PC-9 (cell line): ENCODE measurements at regions of chr9 and their contacts with region 1.

Region 1: GRCh38 chr9:92634712-92635605 is 35.0 kb downstream of the IPPK start:
- DNase-seq: peak in 1 of 2 experiments; percentile 64
- H3K4me3 ChIP-seq: no peak overlapping the region
- H3K27ac ChIP-seq: no peak overlapping the region
- H3K4me1 ChIP-seq: no peaks in the 10 kb centered on the region
- H3K27me3 ChIP-seq: no peaks in the 10 kb centered on the region
- CTCF ChIP-seq: peak; percentile 87

Region 2: DNA sequence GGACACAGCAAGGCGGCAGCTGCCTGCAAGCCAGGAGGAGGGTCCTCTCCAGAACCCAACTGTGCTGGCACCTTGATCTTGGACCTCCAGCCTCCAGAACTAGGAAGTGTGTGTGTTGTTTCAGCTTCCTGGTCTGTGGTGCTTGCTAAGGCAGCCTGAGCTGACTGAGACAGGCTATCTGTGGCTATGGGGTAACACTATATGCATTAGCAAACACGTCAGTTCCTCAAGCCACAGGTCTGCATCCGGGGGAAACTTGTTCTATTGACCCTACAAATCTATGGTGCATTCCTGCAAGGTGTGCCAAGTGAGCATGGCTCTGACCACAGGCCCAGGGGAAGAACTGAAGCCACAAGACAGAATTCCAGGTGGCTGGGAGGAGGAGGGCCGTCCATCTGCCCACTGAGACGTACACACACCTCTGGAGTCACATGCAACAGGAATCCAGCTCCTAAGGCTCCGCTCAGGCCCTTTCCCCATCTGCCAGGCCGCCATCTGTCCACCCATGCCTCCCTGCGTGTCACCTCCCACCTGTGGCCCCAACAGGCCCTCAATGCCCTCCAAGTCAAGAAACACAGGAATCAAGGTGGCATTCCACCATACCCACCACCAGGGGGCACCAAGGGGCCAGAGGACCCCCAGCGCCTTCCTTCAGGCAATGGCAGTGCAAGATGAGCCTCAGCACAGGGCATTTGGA is 859.8 kb before region 1 on chr9:
- CTCF ChIA-PET with region 1: no interaction called
- POLR2A ChIA-PET with region 1: no interaction called
- intact Hi-C with region 1: loop called (anchors 10 kb)
- DNase-seq: peak in 1 of 2 experiments; percentile 50
- H3K4me3 ChIP-seq: no peak overlapping the region
- H3K27ac ChIP-seq: no peak overlapping the region
- H3K4me1 ChIP-seq: no peaks in the 10 kb centered on the region
- H3K27me3 ChIP-seq: peaks cover 85% of the 10 kb centered on the region
- CTCF ChIP-seq: peak; percentile 89

Region 3: GRCh38 chr9:92276331-92277032 is 358.5 kb before region 1 on chr9:
- CTCF ChIA-PET with region 1: no interaction called
- POLR2A ChIA-PET with region 1: no interaction called
- intact Hi-C with region 1: loop called (anchors 10 kb)
- DNase-seq: no peak
- H3K4me3 ChIP-seq: no peak overlapping the region
- H3K27ac ChIP-seq: no peak overlapping the region
- H3K4me1 ChIP-seq: no peaks in the 10 kb centered on the region
- H3K27me3 ChIP-seq: no peaks in the 10 kb centered on the region
- CTCF ChIP-seq: no peak

Region 4: GRCh38 chr9:92325269-92325990 is 309.5 kb before region 1 on chr9 and contains the starts of genes CENPP and NOL8:
- CTCF ChIA-PET with region 1: no interaction called
- POLR2A ChIA-PET with region 1: no interaction called
- intact Hi-C with region 1: loop called (anchors 2 kb)
- DNase-seq: peak; percentile 76 to 86
- H3K4me3 ChIP-seq: peak within 1 kb of the TSS; percentile 87
- H3K27ac ChIP-seq: peak within 1 kb of the TSS; percentile 90
- H3K4me1 ChIP-seq: peaks cover 22% of the 10 kb centered on the region
- H3K27me3 ChIP-seq: no peaks in the 10 kb centered on the region
- CTCF ChIP-seq: no peak
- total RNA-seq, gene CENPP: 7.6 and 10.0 TPM in 2 replicates
- total RNA-seq, gene NOL8: 35.7 and 46.9 TPM in 2 replicates

Region 5: DNA sequence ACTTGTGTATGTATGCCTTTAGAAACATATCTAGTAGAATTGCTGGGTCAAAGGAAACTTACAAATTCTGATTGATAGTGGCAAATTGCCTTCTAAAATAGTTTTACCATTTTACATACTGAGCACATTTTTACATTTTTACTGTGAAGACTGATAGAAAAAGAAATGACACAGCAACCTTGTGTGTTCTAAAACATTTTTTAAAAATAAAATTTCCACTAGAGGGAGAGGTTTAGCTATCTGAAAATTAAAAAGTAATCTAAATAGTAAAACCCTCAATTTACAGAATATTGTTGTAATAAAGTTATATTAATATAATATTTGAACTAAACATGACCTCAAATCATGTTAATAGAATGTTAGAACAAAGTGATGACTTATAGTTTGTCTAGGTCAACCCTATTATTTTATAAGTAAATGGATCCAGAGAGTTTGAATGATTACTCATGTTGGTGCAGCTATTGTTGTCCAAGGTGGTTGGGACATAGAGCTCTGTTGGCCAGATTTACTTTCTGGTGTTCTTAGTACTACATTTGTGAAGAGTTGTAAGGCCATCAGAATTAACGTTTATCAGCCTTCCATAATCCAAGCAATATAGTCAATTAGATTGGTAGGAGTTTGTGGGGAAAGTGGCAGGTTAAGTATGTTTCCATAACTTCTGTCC is 292.0 kb before region 1 on chr9:
- CTCF ChIA-PET with region 1: no interaction called
- POLR2A ChIA-PET with region 1: no interaction called
- intact Hi-C with region 1: loop called (anchors 5 kb)
- DNase-seq: no peak
- H3K4me3 ChIP-seq: no peak overlapping the region
- H3K27ac ChIP-seq: no peak overlapping the region
- H3K4me1 ChIP-seq: no peaks in the 10 kb centered on the region
- H3K27me3 ChIP-seq: no peaks in the 10 kb centered on the region
- CTCF ChIP-seq: peak; percentile 35; the same call in 1 of the 2 replicates

Region 6: GRCh38 chr9:92481040-92481633 is 153.8 kb before region 1 on chr9:
- CTCF ChIA-PET with region 1: no interaction called
- POLR2A ChIA-PET with region 1: no interaction called
- intact Hi-C with region 1: no loop called
- DNase-seq: peak in 1 of 2 experiments; percentile 71
- H3K4me3 ChIP-seq: no peak overlapping the region
- H3K27ac ChIP-seq: peak overlapping the region; percentile 56
- H3K4me1 ChIP-seq: peaks cover 28% of the 10 kb centered on the region
- H3K27me3 ChIP-seq: no peaks in the 10 kb centered on the region
- CTCF ChIP-seq: no peak